ENCODE measurements at regions of chr1 and their contacts with region 1.

Region 1: GRCh38 chr1:167687919-167688519 is 33.8 kb upstream of the MPZL1 start:
- DNase-seq: no peak
- ATAC-seq: peak; percentile 30

Region 2: DNA sequence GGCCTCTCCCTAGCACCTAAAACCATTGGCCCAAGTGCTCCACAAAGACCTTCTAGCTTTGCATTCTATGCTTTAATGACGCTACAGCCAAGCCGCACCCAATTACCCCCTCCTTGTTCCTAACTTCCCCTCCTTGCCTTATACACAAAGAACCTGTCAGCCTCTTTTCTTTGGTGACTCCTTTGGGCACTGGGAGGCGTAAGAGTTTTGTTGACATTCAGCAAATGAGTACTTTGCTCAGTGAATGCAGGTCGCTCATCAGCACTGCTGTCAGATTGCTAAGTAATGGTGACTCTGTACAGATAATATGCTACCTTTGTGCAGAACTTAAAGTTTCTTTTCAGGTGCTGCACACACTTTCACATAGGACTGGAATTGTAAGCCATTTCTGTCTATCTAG is 1333.6 kb before region 1 on chr1:
- intact Hi-C with region 1: no loop called
- DNase-seq: no peak
- ATAC-seq: no peak

Region 3: DNA sequence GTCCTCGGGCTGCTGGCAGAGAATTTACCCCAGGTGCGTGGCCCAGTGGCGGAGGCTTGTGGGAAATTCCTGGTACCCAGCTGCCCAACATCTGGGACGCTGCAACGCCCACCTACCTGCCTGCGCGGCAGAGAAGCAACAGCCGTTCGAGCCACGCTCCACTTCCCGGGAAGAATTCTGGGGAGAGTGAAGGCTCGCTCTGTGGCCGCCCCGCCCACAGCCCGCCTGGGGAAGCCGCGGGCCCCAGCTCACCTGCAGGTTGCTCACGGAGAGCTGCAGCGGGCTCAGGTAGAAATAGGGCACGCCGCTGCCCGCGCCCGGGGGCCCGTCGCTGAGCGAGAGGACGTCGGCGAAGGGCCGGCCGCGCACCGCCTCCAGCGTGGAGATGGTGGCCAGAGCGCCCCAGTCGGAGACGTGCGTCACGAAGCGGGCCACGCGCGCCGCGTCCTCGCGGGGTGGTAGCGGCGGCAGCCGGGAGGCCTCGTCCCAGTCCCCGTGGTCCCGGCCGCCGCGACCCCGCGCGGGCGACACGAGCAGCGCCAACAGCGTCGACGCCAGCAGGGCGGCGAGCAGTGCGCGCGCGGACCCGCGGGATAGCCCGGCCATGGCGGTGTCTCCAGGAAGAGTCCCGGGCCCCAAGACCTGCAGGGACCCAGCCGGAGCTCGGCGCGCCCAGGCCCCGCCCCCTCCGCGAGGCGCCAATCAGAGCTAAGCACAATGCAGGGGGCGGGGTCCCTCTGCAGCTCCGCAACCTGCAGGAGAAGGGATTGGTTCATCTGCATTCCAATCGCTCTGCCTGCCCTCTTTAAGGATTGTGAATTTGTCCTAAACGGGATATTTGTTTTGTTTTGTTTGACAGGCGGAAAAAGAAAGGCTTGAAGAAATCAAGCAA is 134.6 kb before region 1 on chr1 and contains the start of gene CREG1:
- intact Hi-C with region 1: loop called (anchors 5 kb)
- DNase-seq: peak; percentile 98
- ATAC-seq: peak; percentile 100
- total RNA-seq, gene CREG1: 78.5 TPM

Region 4: GRCh38 chr1:167599957-167600581 is 88.0 kb before region 1 on chr1:
- intact Hi-C with region 1: loop called (anchors 1 kb)
- DNase-seq: peak; percentile 75
- ATAC-seq: peak; percentile 70

Region 5: GRCh38 chr1:167629681-167630567 is 58.1 kb before region 1 on chr1 and contains the start of gene RCSD1:
- intact Hi-C with region 1: loop called (anchors 2 kb)
- DNase-seq: peak; percentile 89
- ATAC-seq: peak; percentile 79
- total RNA-seq, gene RCSD1: 41.6 TPM

Region 6: GRCh38 chr1:167665469-167665868 is 22.6 kb before region 1 on chr1:
- intact Hi-C with region 1: loop called (anchors 2 kb)
- DNase-seq: no peak
- ATAC-seq: no peak

Region 7: GRCh38 chr1:167854167-167854566 is 166.1 kb after region 1 on chr1:
- intact Hi-C with region 1: no loop called
- DNase-seq: no peak
- ATAC-seq: no peak

Measured in Right ventricle myocardium inferior (tissue), 1 donor.